ENCODE measurements at regions of chr3 and their contacts with region 1.

Region 1: DNA sequence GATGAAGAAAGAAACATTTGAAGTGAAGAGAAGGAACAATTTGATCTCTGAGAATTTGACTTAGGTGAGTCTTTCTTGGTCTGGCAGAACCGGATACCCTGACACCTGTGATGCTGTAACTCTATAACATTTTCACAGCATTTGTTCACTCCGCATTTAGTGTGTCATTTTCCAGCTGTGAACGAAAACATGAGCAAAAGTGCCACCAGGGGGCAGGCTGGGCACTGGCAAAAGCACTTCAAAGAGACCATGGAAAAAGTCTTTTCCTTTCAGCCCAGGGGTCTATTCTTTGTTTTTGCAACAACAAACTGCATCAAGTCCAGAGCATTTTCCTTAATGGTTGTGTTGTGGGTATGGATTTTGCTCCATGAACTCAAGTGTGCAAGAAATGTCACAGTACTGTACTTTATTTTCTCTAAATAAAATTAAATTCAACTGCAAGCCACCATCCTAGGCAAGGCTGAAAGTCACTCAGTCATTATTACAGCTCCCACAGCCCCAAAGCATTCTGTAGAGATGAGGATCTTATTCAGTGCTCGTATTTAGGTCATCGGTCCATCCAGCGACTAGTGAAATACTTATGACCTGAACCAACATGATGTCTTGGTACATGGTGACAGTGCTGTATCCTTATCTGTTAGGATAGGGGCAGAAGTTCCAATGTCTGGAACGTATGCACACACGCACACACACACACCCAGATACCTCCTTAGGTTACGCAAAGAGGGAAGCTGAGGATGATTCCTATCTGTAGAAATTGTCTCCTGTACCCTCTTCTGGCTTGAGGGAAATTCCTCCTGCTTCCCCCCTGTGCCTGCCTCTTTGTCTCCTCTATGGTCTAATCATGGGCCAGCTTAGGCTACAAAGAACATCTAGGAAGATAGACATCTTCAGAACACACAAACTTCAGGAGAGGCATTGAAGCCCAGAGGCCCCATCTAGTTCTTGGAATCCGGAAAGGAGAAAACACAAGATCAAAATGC is 125.5 kb downstream of the GADL1 start:
- DNase-seq: peak; percentile 42 to 71 (median 51)
- H3K4me3 ChIP-seq: no peak overlapping the region
- H3K4me3 Mint-ChIP-seq: no peak overlapping the region
- H3K27ac ChIP-seq: no peak overlapping the region
- H3K27ac Mint-ChIP-seq: no peak overlapping the region
- H3K4me1 ChIP-seq: no peaks in the 10 kb centered on the region
- H3K4me1 Mint-ChIP-seq: no peaks in the 10 kb centered on the region
- H3K27me3 ChIP-seq: no peaks in the 10 kb centered on the region
- H3K27me3 Mint-ChIP-seq: peaks cover 1 to 16% of the 10 kb centered on the region in 2 donors

Region 2: DNA sequence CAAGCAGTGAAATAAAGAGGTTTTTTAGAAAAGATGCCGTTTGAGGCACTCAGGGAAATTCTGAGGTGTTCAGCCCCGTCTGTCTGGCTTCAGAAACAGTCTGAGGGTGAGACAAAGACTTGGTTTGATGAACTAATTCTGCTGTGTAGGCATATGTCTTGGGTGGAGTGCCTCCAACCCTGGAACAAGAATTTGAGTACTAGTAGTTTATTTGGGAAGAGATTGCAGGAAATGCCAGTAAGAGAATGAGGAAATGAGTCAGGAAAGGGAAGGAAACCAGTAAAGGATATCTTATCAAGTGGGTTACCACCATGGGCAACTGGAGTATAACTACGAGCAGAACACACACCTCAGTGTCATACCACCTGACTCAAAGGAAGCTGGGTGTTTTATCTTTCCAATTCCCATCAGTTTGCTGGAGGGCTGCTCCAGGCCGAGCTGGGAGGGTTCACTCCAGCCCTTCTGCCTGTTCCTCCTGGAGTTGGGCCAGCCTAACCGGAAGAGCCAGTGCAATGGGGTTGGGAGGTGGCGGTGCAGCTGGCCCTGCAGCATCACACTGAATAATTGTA is 87.3 kb before region 1 on chr3:
- CTCF ChIA-PET with region 1: no interaction called
- POLR2A ChIA-PET with region 1: no interaction called
- DNase-seq: no peak
- H3K4me3 ChIP-seq: no peak overlapping the region
- H3K4me3 Mint-ChIP-seq: peak overlapping the region in 5 of 7 donors; percentile 10 to 44 (median 32)
- H3K27ac ChIP-seq: no peak overlapping the region
- H3K27ac Mint-ChIP-seq: peak overlapping the region; percentile 15 to 91 (median 72)
- H3K4me1 ChIP-seq: peaks cover 86% of the 10 kb centered on the region
- H3K4me1 Mint-ChIP-seq: peaks cover 81 to 94% (median 94%) of the 10 kb centered on the region in 3 donors
- H3K27me3 ChIP-seq: no peaks in the 10 kb centered on the region
- H3K27me3 Mint-ChIP-seq: no peaks in the 10 kb centered on the region

Region 3: DNA sequence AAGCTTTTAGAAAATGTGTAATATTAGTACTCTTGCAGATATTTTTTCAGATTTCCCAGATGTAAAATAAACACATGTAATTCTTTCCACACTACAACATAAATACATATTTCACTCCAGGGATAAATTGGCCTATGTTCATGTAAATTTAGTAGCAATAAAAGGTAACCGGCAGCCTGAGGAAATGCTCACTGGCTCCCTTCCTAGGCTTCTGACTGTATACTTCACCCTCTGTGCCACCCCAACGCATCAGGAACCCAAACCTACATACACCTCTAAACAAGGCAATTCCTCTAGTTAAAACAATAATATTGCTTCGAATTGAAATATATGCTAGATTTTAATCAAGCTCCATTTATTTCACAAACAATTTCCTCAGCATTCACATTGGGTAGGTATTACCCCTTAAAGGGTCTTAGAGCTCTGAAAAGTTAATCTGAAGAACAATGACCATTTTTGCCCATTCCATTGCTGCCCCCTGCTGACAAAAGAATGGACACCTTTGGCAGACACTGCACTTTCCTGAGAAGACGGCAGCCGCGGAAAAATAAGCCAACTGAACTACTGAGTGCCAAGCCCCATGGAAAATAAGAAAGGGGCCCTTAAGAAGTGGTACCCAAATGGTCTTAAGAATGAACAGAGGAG is 999.6 kb after region 1 on chr3:
- CTCF ChIA-PET with region 1: interaction called, 13 read pairs
- POLR2A ChIA-PET with region 1: no interaction called
- DNase-seq: peak in 4 of 5 donors; percentile 8 to 52 (median 26)
- H3K4me3 ChIP-seq: no peak overlapping the region
- H3K4me3 Mint-ChIP-seq: no peak overlapping the region
- H3K27ac ChIP-seq: no peak overlapping the region
- H3K27ac Mint-ChIP-seq: no peak overlapping the region
- H3K4me1 ChIP-seq: no peaks in the 10 kb centered on the region
- H3K4me1 Mint-ChIP-seq: peaks cover 0 to 2% (median 0%) of the 10 kb centered on the region in 3 donors
- H3K27me3 ChIP-seq: no peaks in the 10 kb centered on the region
- H3K27me3 Mint-ChIP-seq: peaks cover 3 to 12% of the 10 kb centered on the region in 2 donors